AG04450 (cell line): ENCODE measurements at regions of chr19 and their contacts with region 1.

Region 1: GRCh38 chr19:36837906-36838783 is at the start of gene ZNF790:
- DNase-seq: peak; percentile 70
- H3K4me3 ChIP-seq: peak within 1 kb of the TSS; percentile 80
- H3K27ac ChIP-seq: peak within 1 kb of the TSS; percentile 80
- H3K27me3 ChIP-seq: no peaks in the 10 kb centered on the region
- CTCF ChIP-seq: no peak
- polyA plus RNA-seq, gene ZNF790: 2.6 and 4.1 TPM in 2 replicates

Region 2: DNA sequence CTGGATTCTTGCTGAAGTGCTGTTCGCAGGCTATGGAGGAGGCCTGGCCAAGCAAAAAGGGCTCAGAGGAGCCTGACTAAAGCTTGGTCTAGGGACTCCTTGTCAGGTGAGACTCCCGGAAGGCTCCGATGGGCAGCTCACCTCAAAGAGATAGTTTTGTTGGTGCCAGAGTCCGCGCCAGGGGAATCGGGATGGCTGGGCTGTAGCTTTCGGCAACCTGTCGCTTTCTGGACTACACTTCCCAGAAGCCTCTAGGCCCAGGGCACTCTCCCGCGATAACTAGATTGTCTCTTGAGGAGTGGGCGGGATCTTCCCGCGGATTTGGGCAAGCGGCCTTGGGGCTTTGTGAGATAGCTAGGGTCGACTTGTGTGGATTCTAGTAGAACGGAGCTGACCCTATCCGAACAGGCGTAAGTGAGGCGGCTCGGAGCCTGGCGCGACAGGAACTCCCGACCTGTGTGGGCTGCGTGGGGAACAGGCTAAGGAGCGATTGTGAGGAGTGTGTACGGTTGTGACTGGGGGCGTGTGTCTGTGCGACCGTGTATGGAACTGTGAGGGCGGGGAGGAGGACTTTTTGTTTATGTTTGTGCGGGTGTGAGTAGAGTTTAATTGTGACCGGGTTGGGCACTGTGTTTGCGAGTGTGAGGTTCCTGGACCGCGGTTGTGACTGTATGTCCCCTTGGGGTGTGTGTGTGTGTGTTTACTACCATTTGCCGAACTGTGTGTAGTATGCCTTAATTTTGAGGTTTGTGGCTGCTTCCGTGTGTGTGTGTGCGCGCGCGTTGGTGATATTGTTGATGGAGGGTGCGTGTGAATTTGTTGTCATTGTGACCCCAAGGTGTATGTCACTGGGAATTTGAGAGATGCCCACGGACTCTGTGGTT is 12.7 kb after region 1 on chr19 and contains the start of gene ZNF345:
- CTCF ChIA-PET with region 1: no interaction called
- POLR2A ChIA-PET with region 1: interaction called, 29 read pairs
- DNase-seq: peak; percentile 86
- H3K4me3 ChIP-seq: peak within 1 kb of the TSS; percentile 100
- H3K27ac ChIP-seq: peak within 1 kb of the TSS; percentile 65
- H3K27me3 ChIP-seq: no peaks in the 10 kb centered on the region
- CTCF ChIP-seq: no peak
- polyA plus RNA-seq, gene ZNF345: 2.3 and 2.6 TPM in 2 replicates